ENCODE measurements at regions of chr10 and their contacts with region 1.

Region 1: GRCh38 chr10:102420810-102421644 is at the start of gene FBXL15:
- DNase-seq: peak; percentile 98
- ATAC-seq: peak; percentile 58
- H3K4me3 Mint-ChIP-seq: peak within 1 kb of the TSS; percentile 98
- H3K27ac Mint-ChIP-seq: peak within 1 kb of the TSS; percentile 99
- H3K4me1 Mint-ChIP-seq: peaks cover 19% of the 10 kb centered on the region
- H3K27me3 Mint-ChIP-seq: peaks cover 5% of the 10 kb centered on the region; the same call in 1 of the 2 replicates
- CTCF ChIP-seq: no peak
- total RNA-seq, gene FBXL15: 21.6 to 24.6 TPM (median 23.2 TPM) in 3 replicates

Region 2: DNA sequence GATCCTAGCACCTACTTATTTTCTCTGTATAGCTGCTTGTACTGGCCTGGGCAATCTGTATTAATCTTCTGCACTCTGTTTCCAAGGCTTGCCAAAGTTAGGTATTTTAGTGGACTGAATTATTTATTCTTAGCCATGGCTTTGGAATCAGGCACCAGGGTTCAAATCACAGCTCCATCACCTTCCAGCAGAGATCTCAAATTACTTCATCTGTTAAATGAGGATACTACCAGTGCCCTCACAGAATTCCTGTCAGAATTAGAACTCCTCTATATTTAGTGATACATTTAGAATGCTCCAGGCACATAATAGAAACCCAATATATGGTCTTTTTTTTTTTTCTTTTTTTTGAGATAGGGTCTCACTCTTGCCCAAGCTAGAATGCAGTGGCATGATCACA is 382.6 kb before region 1 on chr10:
- CTCF ChIA-PET with region 1: no interaction called
- POLR2A ChIA-PET with region 1: no interaction called
- DNase-seq: no peak
- ATAC-seq: no peak
- H3K4me3 Mint-ChIP-seq: no peak overlapping the region
- H3K27ac Mint-ChIP-seq: no peak overlapping the region
- H3K4me1 Mint-ChIP-seq: no peaks in the 10 kb centered on the region
- H3K27me3 Mint-ChIP-seq: no peaks in the 10 kb centered on the region
- CTCF ChIP-seq: no peak

Region 3: GRCh38 chr10:102280397-102281101 is 140.5 kb before region 1 on chr10:
- CTCF ChIA-PET with region 1: no interaction called
- POLR2A ChIA-PET with region 1: no interaction called
- DNase-seq: no peak
- ATAC-seq: no peak
- H3K4me3 Mint-ChIP-seq: no peak overlapping the region
- H3K27ac Mint-ChIP-seq: no peak overlapping the region
- H3K4me1 Mint-ChIP-seq: no peaks in the 10 kb centered on the region
- H3K27me3 Mint-ChIP-seq: no peaks in the 10 kb centered on the region
- CTCF ChIP-seq: no peak

Region 4: DNA sequence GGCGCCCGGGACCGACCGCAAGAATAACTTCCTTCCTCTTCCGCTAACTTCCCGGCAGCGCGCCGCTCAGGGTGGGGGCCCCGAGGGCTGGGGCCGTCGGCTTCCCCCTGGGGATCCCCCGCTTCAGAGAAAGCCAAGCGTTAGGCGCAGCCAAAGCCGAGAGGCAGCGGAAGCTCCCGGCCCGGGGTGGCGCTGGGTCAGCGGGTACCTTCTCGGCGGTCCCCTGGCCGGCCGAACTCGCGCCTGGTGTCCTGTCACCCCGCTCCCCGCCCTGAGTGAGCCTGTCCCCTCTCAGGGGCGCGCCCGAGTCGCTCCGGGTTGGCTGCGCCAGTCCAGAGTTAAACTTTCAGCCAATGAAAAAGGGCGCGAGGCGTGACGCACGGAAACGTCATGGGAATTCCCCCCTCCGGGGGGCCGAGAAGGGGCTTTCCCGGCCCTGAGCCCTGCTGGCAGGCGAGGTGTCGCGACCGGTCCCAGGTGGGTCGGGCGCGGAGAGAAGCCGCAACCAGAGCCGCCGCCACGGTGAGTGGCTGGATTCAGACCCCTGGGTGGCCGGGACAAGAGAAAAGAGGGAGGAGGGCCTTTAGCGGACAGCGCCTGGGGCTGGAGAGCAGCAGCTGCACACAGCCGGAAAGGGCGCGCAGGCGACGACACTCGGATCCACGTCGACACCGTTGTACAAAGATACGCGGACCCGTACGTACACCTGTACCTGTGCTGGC is 26.8 kb before region 1 on chr10:
- CTCF ChIA-PET with region 1: interaction called, 58 read pairs
- POLR2A ChIA-PET with region 1: interaction called, 12 read pairs
- DNase-seq: peak; percentile 93
- ATAC-seq: peak; percentile 81
- H3K4me3 Mint-ChIP-seq: peak overlapping the region; percentile 75
- H3K27ac Mint-ChIP-seq: peak overlapping the region; percentile 12; the same call in 1 of the 2 replicates
- H3K4me1 Mint-ChIP-seq: peaks cover 18% of the 10 kb centered on the region
- H3K27me3 Mint-ChIP-seq: peaks cover 41% of the 10 kb centered on the region
- CTCF ChIP-seq: no peak; the same call in none of the 2 replicates

Region 5: DNA sequence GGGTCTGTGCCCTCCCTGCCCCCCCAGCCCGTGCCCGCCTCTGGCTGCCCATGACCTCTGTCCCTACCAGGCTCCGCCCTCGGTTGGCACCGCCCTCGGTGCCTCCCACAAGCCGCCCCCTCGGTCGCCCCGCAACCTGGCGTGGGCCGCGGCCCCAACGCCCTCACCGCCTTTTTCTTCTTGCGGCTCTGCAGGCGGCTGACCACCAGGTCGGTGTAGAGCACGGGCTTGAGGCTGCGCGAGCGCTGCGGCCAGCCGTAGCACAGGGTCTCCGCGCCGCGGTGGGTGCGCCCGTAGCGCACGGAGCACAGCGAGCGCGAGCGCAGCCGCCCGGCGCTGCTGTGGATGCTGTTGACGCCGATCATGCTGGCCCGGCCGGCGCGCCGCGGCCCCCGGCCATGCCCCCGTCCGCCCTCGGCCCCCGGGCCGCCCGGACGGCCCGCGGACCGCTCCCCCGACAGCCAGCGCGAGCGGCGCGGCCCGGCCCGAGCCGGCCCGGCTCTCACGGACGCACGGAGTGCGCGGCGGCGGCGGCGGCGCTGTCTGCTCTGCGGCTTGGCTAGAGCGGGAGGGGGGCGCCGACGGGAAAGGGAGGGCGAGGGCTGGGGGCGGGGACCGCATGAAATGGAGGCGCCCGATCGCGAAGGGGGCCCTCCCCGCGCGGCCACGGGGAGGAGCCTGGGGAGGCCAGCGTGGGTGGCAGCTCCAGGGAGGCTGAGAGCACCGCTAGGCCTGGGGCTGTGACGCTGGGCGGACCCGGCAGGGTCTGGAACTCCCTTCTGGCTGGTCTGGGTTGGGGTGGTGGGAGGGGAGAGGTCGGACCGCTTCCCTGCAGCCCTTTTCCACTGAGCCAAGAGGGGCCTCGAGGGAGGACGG is 12.1 kb before region 1 on chr10:
- CTCF ChIA-PET with region 1: interaction called, 68 read pairs
- POLR2A ChIA-PET with region 1: interaction called, 9 read pairs
- DNase-seq: peak; percentile 55
- ATAC-seq: peak; percentile 29
- H3K4me3 Mint-ChIP-seq: peak overlapping the region; percentile 69
- H3K27ac Mint-ChIP-seq: no peak overlapping the region
- H3K4me1 Mint-ChIP-seq: peaks cover 30% of the 10 kb centered on the region
- H3K27me3 Mint-ChIP-seq: peaks cover 67% of the 10 kb centered on the region
- CTCF ChIP-seq: no peak

Region 6: GRCh38 chr10:102450194-102450938 is 29.3 kb after region 1 on chr10:
- CTCF ChIA-PET with region 1: interaction called, 40 read pairs
- POLR2A ChIA-PET with region 1: interaction called, 26 read pairs
- DNase-seq: peak; percentile 80
- ATAC-seq: peak; percentile 52
- H3K4me3 Mint-ChIP-seq: peak overlapping the region; percentile 93
- H3K27ac Mint-ChIP-seq: peak overlapping the region; percentile 83
- H3K4me1 Mint-ChIP-seq: peaks cover 39% of the 10 kb centered on the region
- H3K27me3 Mint-ChIP-seq: no peaks in the 10 kb centered on the region
- CTCF ChIP-seq: no peak

Region 7: DNA sequence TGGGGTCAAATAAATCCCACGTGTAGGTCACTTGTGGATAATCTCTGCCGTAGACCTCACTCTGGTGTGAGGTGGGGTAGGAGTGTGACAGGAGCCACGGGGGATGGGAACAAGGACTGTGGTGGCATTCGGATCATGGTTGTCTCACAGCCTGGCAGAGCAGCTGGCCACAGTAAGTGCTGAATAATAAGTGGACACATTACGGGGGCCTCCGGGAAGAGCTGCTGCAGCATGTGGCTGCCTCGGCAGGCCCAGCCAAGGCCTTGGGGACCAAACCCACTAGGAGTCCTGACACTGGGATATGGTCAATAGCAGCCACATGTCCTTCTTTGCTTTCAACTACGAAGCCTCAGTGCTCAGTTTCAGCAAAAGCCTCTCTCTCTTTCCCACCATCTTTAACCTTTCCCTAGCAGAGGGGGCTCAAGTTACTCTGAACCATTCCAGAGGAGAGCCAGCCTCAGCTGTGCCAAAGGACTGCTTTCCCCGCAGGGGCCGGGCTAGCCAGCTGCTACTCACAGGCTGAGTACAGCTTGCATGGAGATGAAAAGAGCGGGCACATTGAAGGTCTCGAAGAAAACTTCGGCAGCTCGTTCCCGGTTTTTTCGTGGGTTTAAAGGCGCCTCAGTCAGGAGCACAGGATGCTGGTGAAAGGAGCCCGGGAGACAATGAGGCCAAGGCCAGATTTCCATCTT is 64.2 kb after region 1 on chr10:
- CTCF ChIA-PET with region 1: interaction called, 18 read pairs
- POLR2A ChIA-PET with region 1: no interaction called
- DNase-seq: no peak
- ATAC-seq: no peak
- H3K4me3 Mint-ChIP-seq: no peak overlapping the region
- H3K27ac Mint-ChIP-seq: no peak overlapping the region
- H3K4me1 Mint-ChIP-seq: no peaks in the 10 kb centered on the region
- H3K27me3 Mint-ChIP-seq: no peaks in the 10 kb centered on the region
- CTCF ChIP-seq: no peak